ENCODE measurements at regions of chr2 and their contacts with region 1.

Region 1: DNA sequence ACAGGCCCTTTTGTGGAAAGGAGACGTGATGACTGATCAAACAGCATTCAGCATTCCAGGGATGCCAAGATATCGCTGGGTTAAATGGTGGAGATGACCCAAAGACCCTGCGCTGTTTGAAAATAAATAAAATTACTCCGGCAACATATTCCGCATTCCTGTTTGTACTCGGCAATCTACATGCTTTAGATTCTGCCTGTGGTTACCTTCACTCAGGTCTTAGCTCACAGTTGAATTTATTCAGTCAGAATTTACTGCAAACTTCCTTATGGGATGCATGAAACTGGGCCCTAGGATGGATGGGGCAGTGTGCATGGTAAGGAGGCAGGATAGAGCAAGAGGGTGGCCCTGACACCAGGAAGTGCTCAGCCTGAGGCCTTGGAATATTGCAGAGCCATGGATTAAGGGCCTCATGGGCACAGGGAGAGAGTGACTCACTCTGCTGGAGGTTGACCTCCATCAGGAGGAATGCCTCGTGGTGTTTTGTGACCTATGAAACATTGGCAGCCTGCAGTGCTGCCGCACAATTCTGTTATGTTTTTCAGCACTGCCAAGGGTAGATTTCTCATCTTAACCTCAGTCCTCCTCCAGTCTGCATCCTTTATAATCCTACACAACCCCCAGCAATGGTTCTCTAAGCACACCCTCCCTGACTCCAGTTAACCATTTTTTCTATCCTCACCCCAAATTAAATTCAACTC is 321.4 kb downstream of the IRS1 start:
- DNase-seq: peak; percentile 76
- H3K4me3 Mint-ChIP-seq: no peak overlapping the region
- H3K27ac Mint-ChIP-seq: peak overlapping the region; percentile 85
- H3K4me1 Mint-ChIP-seq: peaks cover 62% of the 10 kb centered on the region
- H3K27me3 Mint-ChIP-seq: no peaks in the 10 kb centered on the region
- CTCF ChIP-seq: no peak

Region 2: DNA sequence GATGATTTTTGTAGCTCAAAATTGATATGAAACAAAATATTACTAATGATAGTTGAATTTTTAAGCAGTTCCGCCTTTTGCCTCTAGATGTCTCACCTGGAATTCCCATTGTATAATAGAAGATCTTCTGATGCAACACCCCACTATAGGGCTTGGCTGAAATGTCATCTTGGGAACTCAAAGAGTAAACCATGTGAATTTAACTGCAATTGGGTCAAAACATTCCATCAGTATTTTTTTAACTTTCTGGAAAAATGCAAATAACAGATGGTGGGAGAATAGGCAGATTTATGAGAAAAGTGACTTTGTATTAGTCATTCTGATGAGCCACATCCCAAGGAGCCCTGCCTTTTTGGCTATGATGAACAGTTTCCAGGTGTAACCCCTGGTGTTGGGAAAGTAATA is 588.8 kb before region 1 on chr2:
- CTCF ChIA-PET with region 1: no interaction called
- intact Hi-C with region 1: loop called (anchors 5 kb)
- DNase-seq: peak; percentile 33
- H3K4me3 Mint-ChIP-seq: no peak overlapping the region
- H3K27ac Mint-ChIP-seq: no peak overlapping the region
- H3K4me1 Mint-ChIP-seq: peaks cover 5% of the 10 kb centered on the region
- H3K27me3 Mint-ChIP-seq: no peaks in the 10 kb centered on the region
- CTCF ChIP-seq: peak; percentile 78

Region 3: DNA sequence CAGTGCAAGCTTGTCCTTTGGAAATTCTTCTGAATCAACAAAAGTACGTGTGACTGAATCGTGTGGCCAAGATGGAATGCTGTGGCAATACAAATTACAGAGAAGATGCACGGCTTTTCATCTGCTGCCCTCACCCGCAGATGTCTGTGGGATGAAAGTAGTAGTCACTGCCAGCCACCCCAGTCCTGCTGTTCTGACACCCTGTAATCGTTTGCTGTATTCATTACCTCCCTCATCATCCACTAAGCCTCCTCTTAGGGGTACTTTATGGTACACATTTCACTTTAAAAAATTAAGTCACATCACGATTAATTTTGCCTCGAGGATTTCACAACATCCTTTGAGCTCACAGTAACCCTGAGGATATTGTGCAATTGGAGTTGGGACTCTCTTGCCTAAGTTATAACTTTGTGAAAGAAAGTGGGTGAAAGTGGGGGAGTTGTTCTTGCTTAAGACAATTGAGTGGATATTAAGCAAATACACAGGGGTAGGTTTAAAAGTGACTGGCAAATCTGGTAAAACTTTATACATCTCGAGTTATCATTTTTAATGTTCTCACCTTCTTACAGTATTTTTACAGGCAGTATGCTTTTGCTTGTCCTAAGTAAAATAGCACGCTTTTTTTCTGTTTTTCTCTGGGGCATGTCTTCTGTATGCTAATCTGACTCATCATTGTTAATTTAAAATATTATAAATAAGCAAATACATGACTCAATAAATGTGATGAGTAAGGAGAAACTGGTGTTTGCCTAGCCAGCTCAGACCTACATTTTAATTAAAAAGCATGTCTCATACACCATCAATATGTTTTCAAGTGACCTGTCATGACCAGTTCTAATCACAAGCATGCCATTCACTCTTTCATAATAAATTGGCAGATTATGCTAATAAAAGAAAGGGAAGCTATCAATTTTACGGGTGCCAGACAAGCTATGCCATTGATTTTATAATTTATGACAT is 359.5 kb before region 1 on chr2:
- CTCF ChIA-PET with region 1: no interaction called
- intact Hi-C with region 1: loop called (anchors 5 kb)
- DNase-seq: peak; percentile 10
- H3K4me3 Mint-ChIP-seq: peak overlapping the region; percentile 25
- H3K27ac Mint-ChIP-seq: peak overlapping the region; percentile 67
- H3K4me1 Mint-ChIP-seq: peaks cover 43% of the 10 kb centered on the region
- H3K27me3 Mint-ChIP-seq: no peaks in the 10 kb centered on the region
- CTCF ChIP-seq: no peak

Region 4: GRCh38 chr2:226411727-226412360 is 66.4 kb before region 1 on chr2:
- CTCF ChIA-PET with region 1: interaction called, 3 read pairs
- intact Hi-C with region 1: loop called (anchors 1 kb)
- DNase-seq: peak; percentile 73
- H3K4me3 Mint-ChIP-seq: peak overlapping the region; percentile 17
- H3K27ac Mint-ChIP-seq: peak overlapping the region; percentile 95
- H3K4me1 Mint-ChIP-seq: peaks cover 37% of the 10 kb centered on the region
- H3K27me3 Mint-ChIP-seq: no peaks in the 10 kb centered on the region
- CTCF ChIP-seq: no peak

Region 5: GRCh38 chr2:226583715-226584114 is 105.5 kb after region 1 on chr2:
- CTCF ChIA-PET with region 1: no interaction called
- intact Hi-C with region 1: loop called (anchors 2 kb)
- DNase-seq: no peak
- H3K4me3 Mint-ChIP-seq: peak overlapping the region; percentile 19
- H3K27ac Mint-ChIP-seq: peak overlapping the region; percentile 73
- H3K4me1 Mint-ChIP-seq: peaks cover 57% of the 10 kb centered on the region
- H3K27me3 Mint-ChIP-seq: no peaks in the 10 kb centered on the region
- CTCF ChIP-seq: no peak

Region 6: DNA sequence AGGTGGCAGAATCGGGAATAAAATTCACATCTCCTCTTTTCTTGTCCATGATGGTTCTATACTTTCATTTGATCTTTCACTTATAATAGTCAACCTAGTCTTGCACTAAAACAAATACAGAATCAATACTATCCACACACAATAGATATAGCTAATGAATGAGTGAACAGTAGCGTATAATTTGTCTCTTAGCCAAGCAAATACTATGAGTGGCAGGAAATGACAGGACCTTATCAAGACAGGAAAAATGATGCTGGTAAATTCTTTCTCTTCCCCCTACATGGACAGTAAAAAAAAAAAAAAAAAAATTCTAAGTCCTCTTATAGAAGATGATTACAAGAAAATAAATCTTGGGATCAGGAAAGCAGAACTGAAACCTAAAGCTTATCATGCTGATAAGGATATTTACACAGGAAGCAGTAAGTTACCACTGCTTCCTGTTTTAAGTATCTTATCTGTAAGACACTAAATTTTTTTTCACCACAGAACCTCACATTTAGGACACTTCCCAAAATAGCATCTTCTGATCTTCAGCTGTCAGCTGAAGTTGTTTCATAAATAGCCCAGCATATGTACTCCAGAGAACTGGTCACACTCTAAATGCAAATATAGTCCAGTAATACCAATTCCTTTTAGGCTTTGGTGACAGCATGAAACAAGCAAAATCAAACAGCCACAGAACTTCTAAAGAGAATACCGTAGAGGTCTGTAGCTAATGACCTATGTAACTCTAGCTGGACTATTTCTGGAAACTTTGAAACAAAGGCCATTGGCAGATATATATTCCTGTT is 294.3 kb after region 1 on chr2:
- CTCF ChIA-PET with region 1: no interaction called
- intact Hi-C with region 1: no loop called
- DNase-seq: no peak
- H3K4me3 Mint-ChIP-seq: no peak overlapping the region
- H3K27ac Mint-ChIP-seq: no peak overlapping the region
- H3K4me1 Mint-ChIP-seq: peaks cover 34% of the 10 kb centered on the region
- H3K27me3 Mint-ChIP-seq: no peaks in the 10 kb centered on the region
- CTCF ChIP-seq: no peak